ENCODE measurements at regions of chr7 and their contacts with region 1.

Region 1: GRCh38 chr7:69827558-69827957 is 229.3 kb downstream of the AUTS2 start:
- DNase-seq: no peak
- CTCF ChIP-seq: no peak

Region 2: GRCh38 chr7:69817121-69817520 is 10.4 kb before region 1 on chr7:
- CTCF ChIA-PET with region 1: interaction called, 13 read pairs
- POLR2A ChIA-PET with region 1: no interaction called
- DNase-seq: no peak
- CTCF ChIP-seq: no peak

Region 3: GRCh38 chr7:70288781-70289456 is 461.4 kb after region 1 on chr7:
- CTCF ChIA-PET with region 1: no interaction called
- POLR2A ChIA-PET with region 1: no interaction called
- DNase-seq: no peak
- CTCF ChIP-seq: no peak

Measured in GM10248 (cell line).